ENCODE measurements at regions of chr2 and their contacts with region 1.

Region 1: DNA sequence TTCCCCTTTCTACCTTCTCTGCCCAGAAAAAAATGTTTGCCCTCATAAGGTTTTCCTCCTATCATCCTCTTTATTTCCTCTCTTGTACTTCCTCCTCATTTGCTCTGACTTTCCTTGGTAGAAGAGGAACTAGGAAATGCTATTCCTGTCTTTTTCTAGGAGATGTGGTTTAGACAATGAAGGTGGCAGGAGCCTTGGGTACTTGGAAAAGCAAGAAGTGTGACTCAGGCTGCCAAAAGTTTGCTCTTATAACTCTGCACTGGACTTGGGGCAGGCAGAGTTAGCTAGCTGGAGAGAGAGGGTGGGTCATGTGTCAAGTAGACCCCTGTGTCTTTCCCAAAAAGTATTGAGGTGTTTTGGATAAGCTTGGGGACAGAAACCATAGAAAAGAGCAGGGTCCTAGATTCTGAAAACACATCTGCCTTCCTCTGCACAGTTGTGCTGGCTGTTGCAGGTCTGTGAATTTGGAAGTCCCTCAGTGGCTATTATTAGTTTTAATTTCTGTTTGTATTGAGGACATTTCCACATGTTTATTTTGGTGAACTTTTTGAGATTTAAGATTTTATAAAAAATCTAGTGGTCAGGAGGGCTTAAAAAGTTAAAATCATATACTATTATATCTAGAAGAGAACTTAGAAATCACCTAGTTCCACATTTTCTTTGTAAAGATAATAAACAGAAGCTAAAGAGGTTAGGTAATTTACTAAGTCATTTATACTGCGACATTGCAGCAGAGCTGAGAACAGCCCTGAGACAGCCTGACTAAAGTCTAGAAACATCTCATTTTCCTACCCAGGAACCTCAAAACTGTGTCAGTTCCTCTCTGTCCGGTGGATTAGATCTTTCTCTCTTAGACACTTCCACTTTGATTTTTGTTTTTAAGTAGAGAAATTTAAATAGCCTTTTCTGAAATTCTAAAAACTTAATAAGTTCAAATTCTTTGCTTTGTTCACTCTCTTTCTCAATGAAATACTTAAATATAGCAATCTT is 16.0 kb downstream of the INSIG2 start:
- DNase-seq: peak; percentile 53
- ATAC-seq: peak; percentile 99
- H3K4me3 ChIP-seq: peak overlapping the region; percentile 45; the same call in 1 of the 2 replicates
- H3K27ac ChIP-seq: peak overlapping the region; percentile 52
- H3K4me1 ChIP-seq: peaks cover 20% of the 10 kb centered on the region
- H3K27me3 ChIP-seq: no peaks in the 10 kb centered on the region
- CTCF ChIP-seq: no peak
- EP300 ChIP-seq: peak in 1 of 2 experiments; percentile 85; a peak in 2 of 4 replicates
- POLR2A ChIP-seq: no peak
- RAD21 ChIP-seq: no peak

Region 2: DNA sequence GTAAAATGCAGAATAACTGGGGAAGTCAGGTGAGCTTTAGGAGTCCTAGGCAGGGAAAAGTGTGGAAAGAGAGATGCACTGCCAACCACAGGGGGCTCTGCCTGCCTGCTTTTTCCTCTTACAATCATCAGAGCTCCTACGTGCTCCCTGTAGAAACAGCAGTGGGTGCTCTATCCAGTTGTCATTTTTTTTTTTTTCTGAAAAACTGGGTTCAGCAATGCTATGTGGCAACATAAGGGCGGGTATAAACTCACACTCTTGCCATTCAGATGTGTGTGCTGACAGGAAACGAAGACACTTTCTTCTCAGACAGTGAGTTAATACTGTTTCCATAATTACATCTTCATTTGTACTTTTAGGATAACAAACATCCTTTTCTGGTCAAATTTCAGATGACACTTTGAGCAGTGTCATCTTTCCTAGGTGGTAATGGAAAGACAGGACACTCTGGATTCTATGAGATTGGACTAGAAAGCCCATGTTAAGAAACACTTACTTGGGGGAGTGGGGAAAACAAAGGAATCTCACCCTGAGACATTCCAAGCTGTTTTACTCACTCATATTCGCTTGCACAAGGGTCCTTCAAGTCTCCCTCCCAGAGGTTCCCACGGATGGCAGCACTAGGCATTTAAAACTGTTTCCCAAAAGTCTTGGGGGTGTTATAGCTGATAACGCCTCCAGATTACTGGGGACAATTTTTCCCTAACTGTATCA is 131.7 kb before region 1 on chr2:
- CTCF ChIA-PET with region 1: no interaction called
- POLR2A ChIA-PET with region 1: no interaction called
- RAD21 ChIA-PET with region 1: no interaction called
- SMC1A ChIA-PET with region 1: no interaction called
- in situ Hi-C with region 1: no loop called
- intact Hi-C with region 1: no loop called
- DNase-seq: no peak
- ATAC-seq: no peak
- H3K4me3 ChIP-seq: no peak overlapping the region
- H3K27ac ChIP-seq: no peak overlapping the region
- H3K4me1 ChIP-seq: no peaks in the 10 kb centered on the region
- H3K27me3 ChIP-seq: no peaks in the 10 kb centered on the region
- CTCF ChIP-seq: no peak
- EP300 ChIP-seq: no peak
- POLR2A ChIP-seq: no peak
- RAD21 ChIP-seq: no peak

Region 3: DNA sequence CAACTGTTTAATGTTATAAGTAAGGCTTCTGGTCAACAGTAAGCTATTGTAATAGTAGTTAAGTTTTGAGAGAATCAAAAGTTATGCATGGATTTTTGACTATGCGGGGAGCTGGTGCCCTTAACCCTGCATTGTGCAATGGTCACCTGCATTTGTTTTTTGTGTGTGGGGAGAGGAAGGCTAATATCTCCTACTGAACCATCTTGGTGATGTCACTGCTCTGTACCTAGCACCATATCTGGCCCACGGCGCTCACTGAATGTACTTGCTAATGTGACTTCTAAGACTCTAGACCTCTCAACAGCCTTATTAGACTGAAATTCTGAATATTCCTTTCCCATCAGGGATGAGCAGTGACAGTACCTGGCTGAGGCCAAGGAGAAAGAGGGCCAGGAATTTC is 30.9 kb before region 1 on chr2:
- CTCF ChIA-PET with region 1: no interaction called
- POLR2A ChIA-PET with region 1: no interaction called
- RAD21 ChIA-PET with region 1: no interaction called
- SMC1A ChIA-PET with region 1: no interaction called
- in situ Hi-C with region 1: no loop called
- intact Hi-C with region 1: no loop called
- DNase-seq: no peak
- ATAC-seq: no peak
- H3K4me3 ChIP-seq: no peak overlapping the region
- H3K27ac ChIP-seq: no peak overlapping the region
- H3K4me1 ChIP-seq: no peaks in the 10 kb centered on the region
- H3K27me3 ChIP-seq: peaks cover 0 to 9% of the 10 kb centered on the region in 2 experiments; a peak in 3 of 4 replicates
- CTCF ChIP-seq: no peak
- EP300 ChIP-seq: no peak
- POLR2A ChIP-seq: no peak
- RAD21 ChIP-seq: no peak

Region 4: DNA sequence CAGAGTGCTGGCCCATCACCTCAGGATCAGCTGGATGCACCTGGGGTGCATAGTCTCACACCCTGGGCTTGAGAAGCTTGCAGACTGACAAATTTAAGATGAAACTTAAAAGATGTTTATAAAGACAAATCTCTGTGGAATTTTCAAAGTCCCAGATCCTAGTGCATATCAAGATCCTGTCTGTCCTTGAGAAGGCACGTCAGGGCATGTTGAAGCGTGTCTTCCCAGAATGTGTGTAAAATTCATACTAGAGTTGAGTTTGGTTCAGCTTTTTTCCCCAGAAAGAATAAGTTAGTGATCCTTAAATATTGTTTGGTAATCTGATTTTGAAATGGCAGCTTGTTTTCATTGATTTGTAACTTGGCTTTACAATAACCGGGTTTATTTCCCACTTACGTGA is 11.5 kb after region 1 on chr2:
- CTCF ChIA-PET with region 1: interaction called, 3 read pairs
- POLR2A ChIA-PET with region 1: interaction called, 7 read pairs
- RAD21 ChIA-PET with region 1: no interaction called
- SMC1A ChIA-PET with region 1: interaction called, 10 read pairs
- in situ Hi-C with region 1: no loop called
- intact Hi-C with region 1: no loop called
- DNase-seq: no peak
- ATAC-seq: no peak
- H3K4me3 ChIP-seq: no peak overlapping the region
- H3K27ac ChIP-seq: no peak overlapping the region
- H3K4me1 ChIP-seq: no peaks in the 10 kb centered on the region
- H3K27me3 ChIP-seq: no peaks in the 10 kb centered on the region
- CTCF ChIP-seq: no peak
- EP300 ChIP-seq: no peak
- POLR2A ChIP-seq: no peak
- RAD21 ChIP-seq: no peak

Region 5: DNA sequence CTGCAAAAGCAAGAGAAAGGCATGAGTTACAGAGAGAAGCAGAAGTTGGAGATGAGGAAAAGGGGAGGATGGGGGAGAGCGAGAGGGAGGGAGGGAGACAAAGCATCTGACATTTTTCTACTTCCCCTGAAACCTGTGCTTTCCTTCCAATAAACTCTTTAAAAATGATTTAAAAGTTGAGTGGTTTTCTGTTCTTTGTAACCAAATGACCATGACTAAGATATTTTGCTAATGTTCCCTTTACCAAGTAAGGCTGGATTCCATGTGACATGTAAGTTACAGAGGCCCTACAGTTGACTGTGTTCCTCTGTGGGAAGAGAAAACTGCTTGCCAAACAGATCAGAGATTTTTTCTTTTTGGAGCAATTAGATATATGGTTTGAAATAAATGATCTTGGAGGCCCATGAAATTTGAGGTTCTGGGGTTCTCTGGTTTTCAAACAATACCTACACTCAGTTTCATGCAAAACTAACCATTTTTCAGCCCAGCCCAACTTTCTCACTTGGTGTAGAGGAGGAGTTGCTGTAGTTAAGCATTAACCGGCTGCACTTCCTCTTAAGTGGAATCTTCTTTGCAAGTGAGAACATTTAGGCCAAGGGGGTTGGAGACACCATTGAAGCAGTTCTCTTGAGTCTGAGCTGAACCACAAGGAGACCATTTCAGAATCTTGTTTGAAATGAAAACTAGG is 18.5 kb after region 1 on chr2:
- CTCF ChIA-PET with region 1: interaction called, 7 read pairs
- POLR2A ChIA-PET with region 1: no interaction called
- RAD21 ChIA-PET with region 1: interaction called, 6 read pairs
- SMC1A ChIA-PET with region 1: interaction called, 18 read pairs
- in situ Hi-C with region 1: no loop called
- intact Hi-C with region 1: no loop called
- DNase-seq: peak; percentile 43
- ATAC-seq: peak; percentile 94
- H3K4me3 ChIP-seq: no peak overlapping the region
- H3K27ac ChIP-seq: no peak overlapping the region
- H3K4me1 ChIP-seq: no peaks in the 10 kb centered on the region
- H3K27me3 ChIP-seq: no peaks in the 10 kb centered on the region
- CTCF ChIP-seq: no peak
- EP300 ChIP-seq: 0 out of 4 replicates have a peak, but pooled peaks of 1 of the 2 experiments have one; percentile 32
- POLR2A ChIP-seq: no peak
- RAD21 ChIP-seq: no peak

Measured in GM12878 (cell line).